A549 (cell line): ENCODE measurements at regions of chr6 and their contacts with region 1.

Region 1: GRCh38 chr6:111011360-111012142 is 29.7 kb downstream of the RPF2 start:
- DNase-seq: peak; percentile 27 to 30
- ATAC-seq: peak; percentile 81 to 82
- H3K4me3 ChIP-seq: no peak overlapping the region
- H3K27ac ChIP-seq: no peak overlapping the region
- H3K4me1 ChIP-seq: no peaks in the 10 kb centered on the region; the same call in 2 of the 3 replicates
- CTCF ChIP-seq: peak; percentile 66
- EP300 ChIP-seq: no peak
- POLR2A ChIP-seq: no peak
- RAD21 ChIP-seq: peak; percentile 61 to 66

Region 2: GRCh38 chr6:111027219-111027618 is 15.7 kb after region 1 on chr6:
- CTCF ChIA-PET with region 1: interaction called, 10 read pairs
- POLR2A ChIA-PET with region 1: no interaction called
- DNase-seq: peak in 1 of 2 experiments; percentile 14
- ATAC-seq: peak in 1 of 2 experiments; percentile 68; a peak in 2 of 6 replicates
- H3K4me3 ChIP-seq: no peak overlapping the region
- H3K27ac ChIP-seq: no peak overlapping the region
- H3K4me1 ChIP-seq: no peaks in the 10 kb centered on the region
- CTCF ChIP-seq: no peak
- EP300 ChIP-seq: no peak
- POLR2A ChIP-seq: no peak
- RAD21 ChIP-seq: peak in 1 of 2 experiments; percentile 47; a peak in 2 of 5 replicates

Region 3: DNA sequence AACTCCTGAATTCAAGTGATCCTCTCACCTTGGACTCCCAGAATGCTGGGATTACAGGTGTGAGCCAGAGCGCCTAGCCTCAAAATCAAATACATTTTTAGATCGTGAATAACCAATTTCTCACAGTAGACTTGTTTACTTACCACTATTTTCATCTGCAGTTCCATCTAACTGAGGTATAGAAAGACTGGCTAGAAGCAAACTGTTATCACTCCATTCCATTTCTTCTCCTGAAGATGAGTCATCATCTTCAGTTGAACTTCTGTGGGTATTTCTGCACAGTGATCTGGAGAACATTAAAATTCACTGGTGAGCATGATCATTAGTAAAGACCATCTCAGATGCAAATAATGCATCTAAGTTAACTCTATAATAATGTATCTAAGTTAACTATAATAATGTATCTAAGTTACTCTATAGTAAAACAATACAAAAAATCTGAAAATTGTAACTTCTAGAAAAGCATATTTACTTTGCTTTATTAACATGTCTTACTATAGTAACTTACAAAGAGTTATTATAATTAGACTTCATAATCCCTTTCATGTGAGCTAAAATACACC is 366.1 kb after region 1 on chr6:
- CTCF ChIA-PET with region 1: no interaction called
- POLR2A ChIA-PET with region 1: no interaction called
- DNase-seq: no peak
- ATAC-seq: no peak
- H3K4me3 ChIP-seq: no peak overlapping the region
- H3K27ac ChIP-seq: no peak overlapping the region
- H3K4me1 ChIP-seq: no peaks in the 10 kb centered on the region
- CTCF ChIP-seq: no peak
- EP300 ChIP-seq: no peak
- POLR2A ChIP-seq: no peak
- RAD21 ChIP-seq: no peak